ENCODE measurements at regions of chr17 and their contacts with region 1.

Region 1: DNA sequence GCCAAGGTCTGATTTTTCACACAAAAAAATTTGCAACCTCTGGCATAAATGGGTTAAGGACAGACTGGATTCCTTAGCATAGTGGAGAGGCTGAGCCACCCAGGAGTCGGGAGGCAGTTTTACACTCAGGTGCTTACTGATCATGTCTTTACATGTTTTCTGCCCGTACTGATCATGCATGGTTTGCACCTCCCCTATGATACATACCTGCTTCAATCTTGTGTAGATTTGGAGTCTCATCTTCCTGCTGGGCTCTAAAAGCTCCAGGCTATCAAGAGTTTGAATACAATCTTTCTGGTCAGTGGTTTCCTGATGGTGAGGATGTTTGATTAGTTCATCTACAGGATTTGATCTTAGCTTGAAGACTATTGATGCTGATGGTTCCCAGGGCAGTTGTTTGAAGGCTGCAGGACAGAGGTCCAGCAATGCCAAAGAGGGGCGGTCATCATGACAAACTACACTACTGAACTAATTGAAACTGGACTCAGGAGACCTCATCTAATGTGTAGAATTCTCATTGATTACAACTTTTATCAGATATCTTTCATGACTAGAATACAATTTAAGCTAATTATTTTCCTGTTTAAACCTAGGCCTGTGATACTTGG is 6.9 kb downstream of the C1QBP start:
- DNase-seq: no peak
- H3K4me3 ChIP-seq: no peak overlapping the region
- H3K27ac ChIP-seq: peak overlapping the region; percentile 23; the same call in 1 of the 2 replicates
- H3K4me1 ChIP-seq: peaks cover 10% of the 10 kb centered on the region; the same call in 1 of the 2 replicates
- H3K27me3 ChIP-seq: no peaks in the 10 kb centered on the region
- CTCF ChIP-seq: no peak

Region 2: DNA sequence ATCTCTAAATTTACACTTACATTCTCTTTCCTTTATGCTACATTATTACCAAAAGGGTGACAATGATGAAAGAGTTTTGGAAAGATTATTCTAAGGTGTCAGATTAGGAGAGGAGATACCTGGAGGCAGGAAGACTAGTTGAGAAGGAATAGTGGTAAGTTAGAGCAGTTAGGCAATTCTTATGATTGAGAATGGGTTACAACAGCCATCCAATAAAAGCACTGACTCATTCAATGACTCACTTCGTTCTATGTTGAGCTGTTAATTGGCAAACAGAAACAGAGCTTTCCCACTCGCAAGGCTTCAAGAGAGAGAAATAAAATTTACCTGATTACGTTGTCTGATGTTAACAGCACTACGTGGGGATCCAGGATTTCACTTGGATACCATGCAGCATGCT is 18.4 kb before region 1 on chr17:
- CTCF ChIA-PET with region 1: no interaction called
- POLR2A ChIA-PET with region 1: interaction called, 14 read pairs
- intact Hi-C with region 1: no loop called
- DNase-seq: peak in 1 of 2 experiments; percentile 94
- H3K4me3 ChIP-seq: 0 out of 2 replicates have a peak overlapping the region, but pooled peaks have one; percentile 10
- H3K27ac ChIP-seq: peak overlapping the region; percentile 94
- H3K4me1 ChIP-seq: peaks cover 45% of the 10 kb centered on the region
- H3K27me3 ChIP-seq: no peaks in the 10 kb centered on the region
- CTCF ChIP-seq: no peak

Region 3: DNA sequence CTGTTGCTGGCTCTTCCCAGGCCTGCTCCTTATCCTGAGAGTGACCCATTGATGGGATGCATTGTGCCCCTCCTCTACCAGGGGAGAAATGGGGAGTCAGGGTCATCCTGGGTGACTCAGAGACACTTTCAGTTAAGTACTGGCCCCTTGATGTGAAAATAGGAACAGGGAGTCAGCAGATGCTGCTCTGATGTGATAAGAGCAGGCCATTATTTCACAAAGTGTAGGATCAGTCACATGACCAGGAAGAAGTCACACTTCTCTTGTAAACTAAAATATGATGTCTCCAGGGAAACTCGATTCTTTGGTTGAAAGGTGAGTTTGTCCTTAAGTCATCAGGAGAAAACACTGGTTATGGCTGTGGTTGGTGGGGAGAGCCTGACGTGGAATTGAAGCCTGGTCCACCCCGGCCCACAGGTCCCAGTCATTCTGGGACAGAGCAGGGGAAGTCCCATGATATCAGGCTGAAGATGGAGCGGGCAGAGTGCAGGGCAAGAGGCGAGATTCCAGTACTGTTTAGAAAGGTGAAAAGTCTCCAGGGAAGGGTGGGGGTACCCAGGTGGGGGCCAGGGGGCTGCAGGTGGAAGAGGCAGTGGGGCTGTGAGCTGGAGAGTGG is 240.9 kb after region 1 on chr17:
- CTCF ChIA-PET with region 1: no interaction called
- POLR2A ChIA-PET with region 1: no interaction called
- intact Hi-C with region 1: no loop called
- DNase-seq: no peak
- H3K4me3 ChIP-seq: no peak overlapping the region
- H3K27ac ChIP-seq: no peak overlapping the region
- H3K4me1 ChIP-seq: no peaks in the 10 kb centered on the region
- H3K27me3 ChIP-seq: peaks cover 81% of the 10 kb centered on the region
- CTCF ChIP-seq: no peak

Measured in PC-9 (cell line).